ENCODE measurements at regions of chr11 and their contacts with region 1.

Region 1: DNA sequence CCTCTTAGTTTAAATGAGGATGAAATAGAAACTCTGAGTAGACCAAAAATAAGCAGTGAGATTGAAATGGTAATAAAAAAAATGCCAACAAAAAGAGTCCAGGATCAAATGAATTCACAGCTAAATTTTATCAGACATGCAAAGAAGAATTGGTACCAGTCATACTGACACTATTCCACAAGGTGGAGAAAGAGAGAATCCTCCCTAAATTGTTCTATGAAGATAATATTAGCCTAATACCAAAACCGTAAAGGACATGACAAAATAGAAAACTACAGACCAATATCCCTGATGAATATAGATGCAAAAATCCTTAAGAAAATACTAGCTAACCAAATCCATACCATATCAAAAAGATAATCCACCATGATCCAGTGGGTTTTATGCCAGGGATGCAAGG is 169.8 kb upstream of the CHORDC1 start:
- DNase-seq: no peak
- ATAC-seq: no peak
- H3K4me3 ChIP-seq: no peak overlapping the region
- H3K27ac ChIP-seq: no peak overlapping the region
- H3K4me1 ChIP-seq: no peaks in the 10 kb centered on the region
- H3K27me3 ChIP-seq: no peaks in the 10 kb centered on the region
- CTCF ChIP-seq: no peak
- POLR2A ChIP-seq: no peak
- RAD21 ChIP-seq: no peak

Region 2: DNA sequence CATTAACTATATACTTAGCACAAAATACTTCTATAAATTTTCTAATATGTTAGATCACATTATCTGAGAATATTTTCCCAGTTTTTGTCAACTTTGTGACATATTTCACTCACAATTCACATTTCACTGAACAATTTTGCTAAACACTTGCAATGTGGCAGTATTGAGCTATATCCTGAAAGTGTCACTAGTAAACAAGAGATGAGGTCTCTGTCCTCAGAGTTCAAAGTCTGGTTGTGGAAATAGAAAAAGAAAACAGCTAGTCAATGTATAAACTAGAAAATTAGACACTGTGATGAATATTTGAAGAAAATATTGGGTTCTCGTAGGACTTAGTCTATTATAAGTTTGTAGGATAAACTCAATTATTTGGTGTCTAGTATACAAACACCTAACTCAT is 82.5 kb before region 1 on chr11:
- CTCF ChIA-PET with region 1: no interaction called
- POLR2A ChIA-PET with region 1: no interaction called
- dilution Hi-C with region 1: no loop called
- in situ Hi-C with region 1: no loop called
- intact Hi-C with region 1: no loop called
- DNase-seq: no peak
- ATAC-seq: no peak
- H3K4me3 ChIP-seq: no peak overlapping the region
- H3K27ac ChIP-seq: no peak overlapping the region
- H3K4me1 ChIP-seq: no peaks in the 10 kb centered on the region
- H3K27me3 ChIP-seq: no peaks in the 10 kb centered on the region
- CTCF ChIP-seq: no peak
- POLR2A ChIP-seq: no peak
- RAD21 ChIP-seq: no peak

Region 3: GRCh38 chr11:90332415-90332814 is 60.3 kb before region 1 on chr11:
- CTCF ChIA-PET with region 1: no interaction called
- POLR2A ChIA-PET with region 1: no interaction called
- dilution Hi-C with region 1: no loop called
- in situ Hi-C with region 1: no loop called
- intact Hi-C with region 1: loop called (anchors 10 kb)
- DNase-seq: no peak
- ATAC-seq: no peak
- H3K4me3 ChIP-seq: no peak overlapping the region
- H3K27ac ChIP-seq: no peak overlapping the region
- H3K4me1 ChIP-seq: no peaks in the 10 kb centered on the region
- H3K27me3 ChIP-seq: no peaks in the 10 kb centered on the region
- CTCF ChIP-seq: no peak
- POLR2A ChIP-seq: no peak
- RAD21 ChIP-seq: no peak

Measured in IMR-90 (cell line).